ENCODE measurements at regions of chr1 and their contacts with region 1.

Region 1: GRCh38 chr1:113978863-113979702 is at the start of gene OLFML3:
- DNase-seq: peak; percentile 85
- H3K4me3 ChIP-seq: peak within 1 kb of the TSS in 3 of 4 donors; percentile 18 to 38 (median 20)
- H3K27ac ChIP-seq: peak within 1 kb of the TSS; percentile 81 to 89 (median 84)
- H3K4me1 ChIP-seq: peaks cover 14 to 78% (median 36%) of the 10 kb centered on the region in 4 donors
- H3K27me3 ChIP-seq: no peaks in the 10 kb centered on the region
- CTCF ChIP-seq: peak; percentile 63 to 82 (median 65)
- EP300 ChIP-seq: no peak
- POLR2A ChIP-seq: peak; percentile 61
- total RNA-seq, gene OLFML3: 15.7 to 29.2 (median 24.3) TPM

Region 2: GRCh38 chr1:114274621-114275317 is 295.7 kb after region 1 on chr1:
- in situ Hi-C with region 1: loop called in 2 of 4 experiments (anchors 5 to 10 kb)
- intact Hi-C with region 1: no loop called
- DNase-seq: no peak
- H3K4me3 ChIP-seq: no peak overlapping the region
- H3K27ac ChIP-seq: no peak overlapping the region
- H3K4me1 ChIP-seq: no peaks in the 10 kb centered on the region
- H3K27me3 ChIP-seq: no peaks in the 10 kb centered on the region
- CTCF ChIP-seq: no peak
- EP300 ChIP-seq: no peak
- POLR2A ChIP-seq: no peak

Region 3: GRCh38 chr1:114282751-114283403 is 303.8 kb after region 1 on chr1:
- in situ Hi-C with region 1: loop called (anchors 5 to 10 kb)
- intact Hi-C with region 1: loop called (anchors 5 kb)
- DNase-seq: peak; percentile 90
- H3K4me3 ChIP-seq: no peak overlapping the region
- H3K27ac ChIP-seq: no peak overlapping the region
- H3K4me1 ChIP-seq: no peaks in the 10 kb centered on the region
- H3K27me3 ChIP-seq: no peaks in the 10 kb centered on the region
- CTCF ChIP-seq: peak; percentile 83 to 89 (median 86)
- EP300 ChIP-seq: no peak
- POLR2A ChIP-seq: no peak

Measured in transverse colon (tissue), 4 donors.